K562 (cell line): ENCODE measurements at regions of chrX and their contacts with region 1.

Region 1: DNA sequence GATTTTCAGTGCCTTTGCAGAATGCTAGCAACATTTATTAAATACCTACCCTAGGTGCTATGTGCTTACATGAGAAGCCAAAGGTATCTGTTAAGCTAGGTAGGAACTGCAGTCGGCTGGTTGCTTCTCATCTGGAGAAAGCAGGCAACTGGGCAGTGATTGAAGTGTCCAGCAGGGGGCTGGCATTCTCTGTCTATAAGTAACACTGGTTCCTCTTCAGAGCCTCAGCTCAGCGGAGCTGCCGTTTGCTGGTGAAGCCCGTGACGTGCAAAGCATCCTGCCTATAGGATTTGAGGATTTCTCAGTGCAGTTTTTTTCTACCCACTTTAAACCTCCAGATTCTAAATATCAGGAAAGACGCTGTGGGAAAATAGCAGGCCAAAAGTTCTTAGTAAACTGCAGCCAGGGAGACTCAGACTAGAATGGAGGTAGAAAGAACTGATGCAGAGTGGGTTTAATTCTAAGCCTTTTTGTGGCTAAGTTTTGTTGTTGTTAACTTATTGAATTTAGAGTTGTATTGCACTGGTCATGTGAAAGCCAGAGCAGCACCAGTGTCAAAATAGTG is at the start of gene GRPR:
- DNase-seq: peak; percentile 52 to 74 (median 56)
- ATAC-seq: peak; percentile 99
- H3K4me3 ChIP-seq: no peak within 1 kb of the TSS
- H3K27ac ChIP-seq: no peak within 1 kb of the TSS
- H3K4me1 ChIP-seq: peaks cover 0 to 12% of the 10 kb centered on the region in 2 experiments; a peak in 2 of 5 replicates
- H3K27me3 ChIP-seq: no peaks in the 10 kb centered on the region
- CTCF ChIP-seq: peak; percentile 66 to 78 (median 75)
- EP300 ChIP-seq: no peak
- POLR2A ChIP-seq: no peak
- RAD21 ChIP-seq: peak; percentile 63 to 80
- polyA plus RNA-seq, gene GRPR: 0.11 TPM in 1 of 2 experiments, not detected in the other

Region 2: GRCh38 chrX:16212436-16212835 is 89.1 kb after region 1 on chrX:
- CTCF ChIA-PET with region 1: interaction called, 6 read pairs
- POLR2A ChIA-PET with region 1: no interaction called
- in situ Hi-C with region 1: no loop called
- intact Hi-C with region 1: loop called (anchors 1 kb)
- DNase-seq: peak in 2 of 4 experiments; percentile 4 to 7
- ATAC-seq: peak; percentile 57; the same call in 2 of the 3 replicates
- H3K4me3 ChIP-seq: no peak overlapping the region
- H3K27ac ChIP-seq: no peak overlapping the region
- H3K4me1 ChIP-seq: no peaks in the 10 kb centered on the region
- H3K27me3 ChIP-seq: no peaks in the 10 kb centered on the region
- CTCF ChIP-seq: peak; percentile 44 to 56 (median 48); a peak in 5 of 6 replicates
- EP300 ChIP-seq: no peak
- POLR2A ChIP-seq: no peak
- RAD21 ChIP-seq: peak; percentile 56 to 85

Region 3: DNA sequence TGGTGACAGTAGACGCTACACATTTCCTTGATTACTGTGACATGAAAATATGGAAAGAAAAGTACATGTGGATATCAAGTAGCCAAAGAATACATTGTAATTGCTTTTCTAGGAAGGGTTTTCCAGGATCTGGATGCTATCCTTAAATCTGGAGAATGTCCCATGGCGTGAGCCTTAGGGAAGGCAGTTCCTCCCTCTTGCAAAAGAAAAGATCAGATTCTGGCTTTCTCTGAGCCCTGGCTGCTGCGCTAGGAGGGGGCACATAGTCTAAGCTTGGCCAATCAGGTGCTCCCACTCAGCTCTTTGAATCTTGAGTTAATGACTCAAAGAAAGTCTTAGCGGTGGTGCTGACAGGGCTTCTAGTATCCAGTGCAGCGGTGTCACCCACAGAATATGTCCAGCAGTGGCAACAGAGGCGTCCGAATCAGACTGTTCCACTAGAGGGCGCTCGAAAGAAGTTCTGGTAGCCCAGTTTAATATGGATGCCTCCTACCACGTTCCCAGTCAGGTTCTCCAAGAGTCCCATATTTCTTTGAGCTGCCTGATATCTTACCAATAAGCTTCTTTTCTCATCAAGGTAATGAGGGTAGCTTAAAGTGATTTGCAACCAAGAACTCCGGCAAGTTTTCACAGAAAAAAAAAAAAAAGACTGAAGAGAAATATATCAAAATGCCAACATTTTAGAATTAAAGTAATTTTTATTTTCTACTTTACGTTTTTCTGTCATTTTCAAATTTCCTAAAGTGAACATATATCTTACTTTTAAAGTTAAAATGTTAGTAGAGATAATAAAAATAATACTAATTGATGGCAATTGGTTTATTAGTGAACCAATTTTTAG is 313.3 kb after region 1 on chrX:
- CTCF ChIA-PET with region 1: no interaction called
- POLR2A ChIA-PET with region 1: no interaction called
- in situ Hi-C with region 1: no loop called
- intact Hi-C with region 1: loop called (anchors 5 kb)
- DNase-seq: peak; percentile 48 to 79 (median 62)
- ATAC-seq: peak; percentile 100
- H3K4me3 ChIP-seq: no peak overlapping the region
- H3K27ac ChIP-seq: no peak overlapping the region
- H3K4me1 ChIP-seq: no peaks in the 10 kb centered on the region
- H3K27me3 ChIP-seq: no peaks in the 10 kb centered on the region
- CTCF ChIP-seq: peak; percentile 69 to 81 (median 74)
- EP300 ChIP-seq: no peak
- POLR2A ChIP-seq: no peak
- RAD21 ChIP-seq: peak; percentile 38 to 63; a peak in 3 of 4 replicates